HepG2 (cell line): ENCODE measurements at regions of chr3 and their contacts with region 1.

Region 1: DNA sequence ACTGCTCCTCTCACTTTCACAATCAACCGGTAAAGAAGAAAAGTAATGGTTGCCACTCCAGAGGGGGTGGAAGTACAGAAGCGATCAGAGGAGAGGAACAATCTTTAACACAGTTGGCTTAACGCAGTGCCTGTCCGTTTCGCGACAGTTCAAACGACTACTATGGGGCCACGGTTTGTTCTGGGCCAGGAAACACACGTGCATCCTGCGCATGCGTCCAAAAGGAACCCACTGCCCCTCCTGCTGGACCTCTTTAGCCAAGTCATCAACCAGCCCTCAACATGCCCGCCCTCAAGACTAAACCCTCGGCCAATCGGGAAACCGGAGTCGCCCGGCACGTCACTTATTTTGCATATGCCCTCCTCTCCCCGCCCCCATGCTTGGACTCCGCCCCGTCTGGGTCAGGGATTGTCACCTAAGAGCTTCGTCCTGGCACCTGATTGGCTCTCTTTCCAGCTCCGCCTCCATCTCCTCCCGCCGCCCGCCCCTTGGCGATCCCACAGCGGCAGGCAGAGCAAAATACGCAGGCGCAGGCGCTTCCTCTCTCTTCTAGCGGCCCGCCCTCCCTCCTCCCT is 345 bp upstream of the CDV3 start:
- DNase-seq: peak; percentile 99
- ATAC-seq: peak; percentile 90
- H3K4me3 ChIP-seq: peak overlapping the region; percentile 63 to 92 (median 80); a peak in 5 of 6 replicates
- H3K27ac ChIP-seq: peak overlapping the region; percentile 93
- H3K4me1 ChIP-seq: peaks cover 72% of the 10 kb centered on the region
- H3K27me3 ChIP-seq: no peaks in the 10 kb centered on the region
- CTCF ChIP-seq: peak; percentile 39
- EP300 ChIP-seq: no peak
- POLR2A ChIP-seq: peak; percentile 84 to 96
- RAD21 ChIP-seq: 0 out of 2 replicates have a peak, but pooled peaks have one; percentile 4

Region 2: GRCh38 chr3:133040696-133041523 is 532.2 kb before region 1 on chr3:
- CTCF ChIA-PET with region 1: no interaction called
- POLR2A ChIA-PET with region 1: no interaction called
- in situ Hi-C with region 1: no loop called
- intact Hi-C with region 1: loop called (anchors 10 kb)
- DNase-seq: peak; percentile 58
- ATAC-seq: peak; percentile 95
- H3K4me3 ChIP-seq: no peak overlapping the region
- H3K27ac ChIP-seq: no peak overlapping the region
- H3K4me1 ChIP-seq: no peaks in the 10 kb centered on the region
- H3K27me3 ChIP-seq: peaks cover 0 to 25% of the 10 kb centered on the region in 2 experiments; a peak in 3 of 5 replicates
- CTCF ChIP-seq: peak; percentile 84
- EP300 ChIP-seq: no peak
- POLR2A ChIP-seq: no peak
- RAD21 ChIP-seq: peak; percentile 68; the same call in 1 of the 2 replicates

Region 3: GRCh38 chr3:133159498-133160475 is 413.4 kb before region 1 on chr3:
- CTCF ChIA-PET with region 1: no interaction called
- POLR2A ChIA-PET with region 1: no interaction called
- in situ Hi-C with region 1: no loop called
- intact Hi-C with region 1: no loop called
- DNase-seq: no peak
- ATAC-seq: no peak
- H3K4me3 ChIP-seq: no peak overlapping the region
- H3K27ac ChIP-seq: no peak overlapping the region
- H3K4me1 ChIP-seq: no peaks in the 10 kb centered on the region
- H3K27me3 ChIP-seq: no peaks in the 10 kb centered on the region
- CTCF ChIP-seq: no peak
- EP300 ChIP-seq: no peak
- POLR2A ChIP-seq: no peak
- RAD21 ChIP-seq: no peak

Region 4: DNA sequence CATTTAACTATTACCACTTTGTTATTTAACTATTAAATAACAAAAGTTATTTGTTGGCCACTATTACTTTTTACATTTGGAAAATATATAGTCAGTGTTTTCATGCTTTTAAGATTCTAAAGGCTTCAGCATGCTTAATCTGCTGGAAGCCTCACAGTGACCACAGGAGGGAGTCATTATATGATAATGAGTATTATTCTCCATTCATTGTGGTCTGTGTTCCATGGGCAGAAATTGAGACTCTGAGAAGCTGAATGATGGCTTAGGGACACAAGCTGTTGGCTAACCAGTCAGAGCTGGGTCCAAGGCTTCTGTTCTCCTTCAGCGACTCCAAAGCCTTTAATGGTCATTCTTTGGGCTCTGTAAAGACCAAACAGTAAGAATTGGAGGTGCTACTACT is 108.6 kb before region 1 on chr3:
- CTCF ChIA-PET with region 1: no interaction called
- POLR2A ChIA-PET with region 1: interaction called, 16 read pairs
- in situ Hi-C with region 1: loop called (anchors 10 kb)
- intact Hi-C with region 1: no loop called
- DNase-seq: no peak
- ATAC-seq: no peak
- H3K4me3 ChIP-seq: no peak overlapping the region
- H3K27ac ChIP-seq: no peak overlapping the region
- H3K4me1 ChIP-seq: peaks cover 42% of the 10 kb centered on the region
- H3K27me3 ChIP-seq: peaks cover 0 to 5% of the 10 kb centered on the region in 2 experiments; a peak in 1 of 5 replicates
- CTCF ChIP-seq: no peak
- EP300 ChIP-seq: no peak
- POLR2A ChIP-seq: no peak
- RAD21 ChIP-seq: no peak

Region 5: GRCh38 chr3:133475245-133476010 is 97.7 kb before region 1 on chr3:
- CTCF ChIA-PET with region 1: no interaction called
- POLR2A ChIA-PET with region 1: no interaction called
- in situ Hi-C with region 1: no loop called
- intact Hi-C with region 1: no loop called
- DNase-seq: no peak
- ATAC-seq: no peak
- H3K4me3 ChIP-seq: no peak overlapping the region
- H3K27ac ChIP-seq: no peak overlapping the region
- H3K4me1 ChIP-seq: peaks cover 23% of the 10 kb centered on the region
- H3K27me3 ChIP-seq: no peaks in the 10 kb centered on the region; a peak in 2 of 5 replicates
- CTCF ChIP-seq: no peak
- EP300 ChIP-seq: no peak
- POLR2A ChIP-seq: no peak
- RAD21 ChIP-seq: no peak

Region 6: DNA sequence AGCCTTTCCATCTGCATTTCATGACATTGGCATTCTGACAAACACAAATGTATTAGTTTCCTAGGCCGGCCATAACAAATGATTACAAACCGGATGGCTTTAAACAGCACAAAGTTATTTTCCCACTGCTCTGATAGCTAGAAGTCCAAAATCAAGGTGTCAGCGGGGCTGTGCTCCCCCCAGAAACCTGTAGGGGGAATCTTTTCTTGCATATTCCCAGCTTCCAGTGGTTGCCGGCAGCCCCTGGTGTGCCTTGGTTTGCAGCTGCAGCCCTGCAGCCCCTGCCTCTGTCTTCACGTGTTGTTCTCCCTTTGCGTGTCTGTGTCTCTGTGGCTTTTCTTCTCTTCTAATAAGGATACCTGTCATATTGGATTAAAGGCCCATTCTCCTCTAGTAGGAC is 78.7 kb before region 1 on chr3:
- CTCF ChIA-PET with region 1: interaction called, 17 read pairs
- POLR2A ChIA-PET with region 1: interaction called, 22 read pairs
- in situ Hi-C with region 1: loop called (anchors 5 kb)
- intact Hi-C with region 1: loop called (anchors 1 kb)
- DNase-seq: peak; percentile 65
- ATAC-seq: peak; percentile 89
- H3K4me3 ChIP-seq: no peak overlapping the region
- H3K27ac ChIP-seq: no peak overlapping the region
- H3K4me1 ChIP-seq: peaks cover 17% of the 10 kb centered on the region
- H3K27me3 ChIP-seq: no peaks in the 10 kb centered on the region
- CTCF ChIP-seq: peak; percentile 70
- EP300 ChIP-seq: no peak
- POLR2A ChIP-seq: no peak
- RAD21 ChIP-seq: peak; percentile 83

Region 7: GRCh38 chr3:133547432-133548041 is 25.6 kb before region 1 on chr3:
- CTCF ChIA-PET with region 1: no interaction called
- POLR2A ChIA-PET with region 1: interaction called, 19 read pairs
- in situ Hi-C with region 1: no loop called
- intact Hi-C with region 1: no loop called
- DNase-seq: peak; percentile 46
- ATAC-seq: peak; percentile 57
- H3K4me3 ChIP-seq: peak overlapping the region in 1 of 3 experiments; percentile 41; a peak in 2 of 6 replicates
- H3K27ac ChIP-seq: peak overlapping the region; percentile 5
- H3K4me1 ChIP-seq: peaks cover 74% of the 10 kb centered on the region
- H3K27me3 ChIP-seq: no peaks in the 10 kb centered on the region; a peak in 1 of 5 replicates
- CTCF ChIP-seq: no peak
- EP300 ChIP-seq: no peak
- POLR2A ChIP-seq: no peak
- RAD21 ChIP-seq: no peak